Adrenal gland (tissue), 19 donors: ENCODE measurements at regions of chr3 and their contacts with region 1.

Region 1: DNA sequence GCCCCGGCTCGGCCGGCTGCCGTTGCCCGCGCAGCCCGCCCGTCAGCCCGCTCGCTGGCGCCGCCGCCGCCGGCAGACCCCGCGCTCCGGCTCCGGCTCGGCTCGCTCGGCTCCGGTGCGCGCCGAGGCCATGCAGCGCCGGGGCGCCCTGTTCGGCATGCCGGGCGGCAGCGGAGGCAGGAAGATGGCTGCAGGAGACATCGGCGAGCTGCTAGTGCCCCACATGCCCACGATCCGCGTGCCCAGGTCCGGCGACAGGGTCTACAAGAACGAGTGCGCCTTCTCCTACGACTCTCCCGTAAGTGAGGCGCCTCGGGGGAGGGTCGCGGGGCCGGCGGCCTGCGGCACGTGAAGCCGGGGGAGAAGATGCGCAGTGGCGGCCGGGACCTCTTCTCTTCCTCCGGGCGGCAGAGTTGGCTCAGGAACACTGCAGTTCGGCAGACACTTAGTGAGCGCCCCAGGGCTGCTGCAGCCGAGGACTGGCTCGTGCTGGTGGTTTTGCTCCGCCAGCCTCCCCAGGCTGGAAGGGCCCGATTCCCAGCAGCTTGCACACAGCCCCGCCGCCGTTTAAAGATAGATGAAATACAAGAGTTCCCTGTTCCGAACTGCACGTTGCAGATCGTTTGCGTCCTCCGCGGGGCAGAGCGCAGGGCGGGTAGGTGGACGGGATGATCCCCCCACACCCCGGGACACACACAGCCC is 407 bp downstream of the USP13 start:
- DNase-seq: peak; percentile 77 to 91 (median 87)
- H3K4me3 ChIP-seq: peak overlapping the region in 3 of 4 donors; percentile 80 to 92 (median 81)
- H3K27ac ChIP-seq: peak overlapping the region; percentile 74 to 98 (median 95)
- H3K4me1 ChIP-seq: peaks cover 5 to 24% of the 10 kb centered on the region in 2 donors
- H3K27me3 ChIP-seq: no peaks in the 10 kb centered on the region
- CTCF ChIP-seq: no peak
- POLR2A ChIP-seq: peak; percentile 44 to 81

Region 2: GRCh38 chr3:179706233-179706632 is 53.0 kb after region 1 on chr3:
- intact Hi-C with region 1: loop called in 1 of 2 experiments (anchors 10 kb)
- DNase-seq: peak; percentile 31 to 82 (median 76)
- H3K4me3 ChIP-seq: no peak overlapping the region
- H3K27ac ChIP-seq: peak overlapping the region in 3 of 5 donors; percentile 11 to 72 (median 18)
- H3K4me1 ChIP-seq: peaks cover 24 to 29% of the 10 kb centered on the region in 2 donors
- H3K27me3 ChIP-seq: no peaks in the 10 kb centered on the region
- CTCF ChIP-seq: peak in 1 of 6 experiments; percentile 11
- POLR2A ChIP-seq: no peak

Region 3: GRCh38 chr3:179743913-179744312 is 90.7 kb after region 1 on chr3:
- intact Hi-C with region 1: loop called in 1 of 2 experiments (anchors 10 kb)
- DNase-seq: peak in 1 of 7 donors; percentile 20
- H3K4me3 ChIP-seq: peak overlapping the region in 1 of 4 donors; percentile 19
- H3K27ac ChIP-seq: peak overlapping the region in 2 of 5 donors; percentile 31 to 54
- H3K4me1 ChIP-seq: peaks cover 4 to 5% of the 10 kb centered on the region in 2 donors
- H3K27me3 ChIP-seq: no peaks in the 10 kb centered on the region
- CTCF ChIP-seq: no peak
- POLR2A ChIP-seq: no peak